CD8-positive, alpha-beta memory T cell (primary cell): ENCODE measurements at regions of chr14 and their contacts with region 1.

Region 1: DNA sequence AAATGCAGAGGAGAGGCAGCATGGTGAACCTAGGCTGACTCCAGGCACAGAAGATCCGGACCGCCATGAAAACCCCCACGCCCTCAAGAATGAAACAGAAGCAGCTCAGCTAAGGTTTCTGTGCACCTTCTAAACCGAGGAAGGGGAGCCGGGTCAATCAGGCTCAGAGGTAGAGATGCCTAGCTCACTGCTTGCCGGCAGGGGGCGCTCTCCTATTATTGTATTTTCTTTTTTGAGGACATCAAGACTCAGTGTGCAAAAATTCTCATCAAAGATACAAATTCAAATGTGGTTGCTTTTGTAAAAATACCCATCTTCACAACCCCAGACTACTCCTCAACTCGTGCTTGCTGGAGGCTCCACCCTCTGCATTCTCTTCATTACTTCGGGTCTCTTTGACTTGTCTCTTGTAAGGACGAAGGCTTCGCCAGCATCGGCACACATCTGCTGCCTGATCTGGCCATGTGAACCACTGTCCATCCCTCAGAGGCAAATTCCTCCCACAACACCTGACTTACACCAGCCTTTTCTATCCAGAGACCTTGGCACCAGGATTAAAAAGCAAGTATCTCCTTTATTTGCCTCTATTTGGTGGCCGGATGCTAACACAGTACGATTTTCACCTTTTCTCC is 33.4 kb upstream of the RNASE3 start:
- DNase-seq: peak; percentile 49 to 74 (median 62)
- H3K4me3 ChIP-seq: no peak overlapping the region
- H3K4me3 Mint-ChIP-seq: no peak overlapping the region
- H3K27ac ChIP-seq: no peak overlapping the region
- H3K27ac Mint-ChIP-seq: peak overlapping the region in 1 of 8 donors; percentile 16
- H3K4me1 ChIP-seq: no peaks in the 10 kb centered on the region
- H3K4me1 Mint-ChIP-seq: peaks cover 0 to 5% (median 5%) of the 10 kb centered on the region in 3 donors
- H3K27me3 ChIP-seq: peaks cover 5% of the 10 kb centered on the region
- H3K27me3 Mint-ChIP-seq: peaks cover 14 to 45% of the 10 kb centered on the region in 2 donors

Region 2: GRCh38 chr14:20757965-20758364 is 99.8 kb before region 1 on chr14:
- CTCF ChIA-PET with region 1: interaction called, 14 read pairs
- POLR2A ChIA-PET with region 1: no interaction called
- DNase-seq: peak in 1 of 5 donors; percentile 15
- H3K4me3 ChIP-seq: no peak overlapping the region
- H3K4me3 Mint-ChIP-seq: no peak overlapping the region
- H3K27ac ChIP-seq: no peak overlapping the region
- H3K27ac Mint-ChIP-seq: no peak overlapping the region
- H3K4me1 ChIP-seq: no peaks in the 10 kb centered on the region
- H3K4me1 Mint-ChIP-seq: no peaks in the 10 kb centered on the region
- H3K27me3 ChIP-seq: no peaks in the 10 kb centered on the region
- H3K27me3 Mint-ChIP-seq: peaks cover 9 to 11% of the 10 kb centered on the region in 2 donors

Region 3: DNA sequence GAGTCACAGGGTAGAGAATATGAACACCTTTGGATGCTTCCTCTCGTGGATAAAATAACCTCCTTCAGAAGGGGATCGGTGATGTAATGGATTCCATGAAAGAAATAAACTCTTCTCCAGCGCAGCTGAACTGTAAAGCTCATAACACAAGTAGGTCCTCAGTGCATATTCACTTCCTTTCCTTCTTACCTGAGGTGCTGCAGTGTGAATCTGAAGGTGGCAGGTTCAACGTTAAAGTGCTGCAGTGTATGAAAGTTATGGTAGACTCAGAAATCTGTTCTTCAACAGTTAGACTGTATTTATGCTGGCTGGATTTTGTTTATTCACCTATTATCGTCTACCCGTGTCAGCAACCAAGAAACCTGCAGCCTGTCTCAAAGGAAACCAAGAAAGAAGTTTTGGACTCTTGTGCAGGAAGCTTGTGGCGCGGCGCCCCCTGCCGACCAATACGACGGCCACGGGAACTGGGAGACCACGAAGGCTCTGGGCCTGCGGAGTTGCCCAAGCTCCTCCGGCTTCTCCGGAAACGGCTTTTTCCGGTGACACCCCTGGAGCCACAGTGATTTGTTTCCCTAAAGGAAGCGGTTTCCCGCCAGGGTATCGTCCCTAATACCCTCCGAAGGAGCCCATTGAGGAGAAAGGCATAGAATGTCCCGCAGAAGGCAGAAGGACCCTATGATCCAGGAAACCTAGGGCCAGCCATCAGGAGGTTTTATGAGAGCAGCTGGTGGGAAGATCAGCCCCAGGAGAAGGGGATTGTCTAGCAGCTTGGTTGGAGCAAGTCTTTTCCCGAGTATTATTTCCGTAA is 15.8 kb after region 1 on chr14:
- CTCF ChIA-PET with region 1: interaction called, 17 read pairs
- POLR2A ChIA-PET with region 1: no interaction called
- DNase-seq: peak; percentile 56 to 79 (median 62)
- H3K4me3 ChIP-seq: no peak overlapping the region
- H3K4me3 Mint-ChIP-seq: peak overlapping the region in 4 of 7 donors; percentile 33 to 55 (median 50)
- H3K27ac ChIP-seq: no peak overlapping the region
- H3K27ac Mint-ChIP-seq: peak overlapping the region in 1 of 8 donors; percentile 38
- H3K4me1 ChIP-seq: peaks cover 10% of the 10 kb centered on the region
- H3K4me1 Mint-ChIP-seq: peaks cover 8 to 12% (median 11%) of the 10 kb centered on the region in 3 donors
- H3K27me3 ChIP-seq: no peaks in the 10 kb centered on the region
- H3K27me3 Mint-ChIP-seq: peaks cover 3 to 26% of the 10 kb centered on the region in 2 donors